ENCODE measurements at regions of chr1 and their contacts with region 1.

Region 1: GRCh38 chr1:233440951-233441401 is 113.5 kb downstream of the MAP3K21 start:
- DNase-seq: peak; percentile 49
- H3K4me3 ChIP-seq: no peak overlapping the region; a peak in 1 of 4 replicates
- H3K27ac ChIP-seq: no peak overlapping the region
- H3K4me1 ChIP-seq: peaks cover 0 to 6% of the 10 kb centered on the region in 2 experiments; a peak in 1 of 4 replicates
- H3K27me3 ChIP-seq: no peaks in the 10 kb centered on the region
- CTCF ChIP-seq: peak; percentile 83
- EP300 ChIP-seq: no peak
- RAD21 ChIP-seq: peak; percentile 97

Region 2: DNA sequence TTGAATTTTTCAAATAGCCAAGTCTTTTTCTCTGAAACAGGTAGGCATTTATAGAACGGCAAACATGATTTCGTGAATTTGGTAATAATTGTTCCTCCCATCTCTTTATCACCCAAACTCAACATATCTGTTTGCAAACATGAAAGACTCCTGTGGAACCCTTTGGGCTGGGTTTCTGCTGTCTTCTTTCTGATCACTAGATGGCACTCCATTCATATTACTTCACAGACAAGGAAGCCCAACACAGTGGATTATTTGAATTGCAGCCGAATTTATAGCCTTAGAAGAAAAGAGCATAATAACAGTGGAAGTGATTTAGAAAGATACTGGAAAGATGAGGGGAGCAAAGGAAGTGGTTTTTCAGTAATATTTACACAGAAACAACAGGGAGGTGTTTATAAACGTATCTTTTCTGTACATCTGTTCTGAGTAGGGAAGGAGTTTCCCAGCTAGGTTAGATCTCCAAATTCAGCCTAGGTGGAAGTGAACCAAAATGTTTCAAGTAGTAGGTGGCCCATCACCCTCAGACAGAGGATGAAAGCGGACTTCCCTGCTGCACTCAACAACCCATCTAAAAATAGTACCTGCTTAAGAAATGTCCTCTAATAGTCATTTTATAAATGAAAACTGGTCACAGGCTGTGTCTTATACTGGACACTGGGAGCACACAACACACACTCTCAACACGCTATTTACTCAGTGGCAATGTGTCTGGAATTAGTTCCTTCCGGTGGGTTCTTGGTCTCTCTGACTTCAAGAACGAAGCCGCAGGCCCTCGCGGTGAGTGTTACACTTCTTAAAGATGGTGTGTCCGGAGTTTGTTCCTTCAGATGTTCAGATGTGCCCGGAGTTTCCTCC is 45.9 kb before region 1 on chr1:
- CTCF ChIA-PET with region 1: interaction called, 26 read pairs
- POLR2A ChIA-PET with region 1: no interaction called
- DNase-seq: peak; percentile 52
- H3K4me3 ChIP-seq: no peak overlapping the region; a peak in 1 of 4 replicates
- H3K27ac ChIP-seq: no peak overlapping the region
- H3K4me1 ChIP-seq: peaks cover 0 to 5% of the 10 kb centered on the region in 2 experiments; a peak in 1 of 4 replicates
- H3K27me3 ChIP-seq: peaks cover 7% of the 10 kb centered on the region; the same call in 1 of the 2 replicates
- CTCF ChIP-seq: peak; percentile 91
- EP300 ChIP-seq: no peak
- RAD21 ChIP-seq: peak; percentile 97

Region 3: GRCh38 chr1:233463333-233463732 is 22.4 kb after region 1 on chr1:
- CTCF ChIA-PET with region 1: interaction called, 10 read pairs
- POLR2A ChIA-PET with region 1: no interaction called
- DNase-seq: no peak
- H3K4me3 ChIP-seq: no peak overlapping the region
- H3K27ac ChIP-seq: no peak overlapping the region
- H3K4me1 ChIP-seq: no peaks in the 10 kb centered on the region
- H3K27me3 ChIP-seq: no peaks in the 10 kb centered on the region
- CTCF ChIP-seq: no peak
- EP300 ChIP-seq: no peak
- RAD21 ChIP-seq: no peak

Region 4: GRCh38 chr1:233796146-233796783 is 355.3 kb after region 1 on chr1:
- CTCF ChIA-PET with region 1: interaction called, 64 read pairs
- POLR2A ChIA-PET with region 1: no interaction called
- DNase-seq: no peak
- H3K4me3 ChIP-seq: no peak overlapping the region
- H3K27ac ChIP-seq: no peak overlapping the region
- H3K4me1 ChIP-seq: no peaks in the 10 kb centered on the region; a peak in 1 of 4 replicates
- H3K27me3 ChIP-seq: no peaks in the 10 kb centered on the region
- CTCF ChIP-seq: no peak
- EP300 ChIP-seq: no peak
- RAD21 ChIP-seq: no peak

Region 5: GRCh38 chr1:234065794-234066447 is 624.9 kb after region 1 on chr1:
- CTCF ChIA-PET with region 1: interaction called, 43 read pairs
- POLR2A ChIA-PET with region 1: interaction called, 4 read pairs
- DNase-seq: peak; percentile 70
- H3K4me3 ChIP-seq: no peak overlapping the region
- H3K27ac ChIP-seq: no peak overlapping the region
- H3K4me1 ChIP-seq: no peaks in the 10 kb centered on the region; a peak in 1 of 4 replicates
- H3K27me3 ChIP-seq: no peaks in the 10 kb centered on the region
- CTCF ChIP-seq: peak; percentile 89
- EP300 ChIP-seq: no peak
- RAD21 ChIP-seq: peak; percentile 76